HEK293T (cell line): ENCODE measurements at regions of chr4 and their contacts with region 1.

Region 1: GRCh38 chr4:121370729-121371325 is 10.0 kb downstream of the QRFPR start:
- DNase-seq: peak; percentile 19

Region 2: GRCh38 chr4:120304801-120305200 is 1066.0 kb before region 1 on chr4:
- CTCF ChIA-PET with region 1: no interaction called
- POLR2A ChIA-PET with region 1: no interaction called
- DNase-seq: no peak

Region 3: GRCh38 chr4:121199742-121200561 is 170.9 kb before region 1 on chr4:
- CTCF ChIA-PET with region 1: no interaction called
- POLR2A ChIA-PET with region 1: no interaction called
- DNase-seq: no peak

Region 4: DNA sequence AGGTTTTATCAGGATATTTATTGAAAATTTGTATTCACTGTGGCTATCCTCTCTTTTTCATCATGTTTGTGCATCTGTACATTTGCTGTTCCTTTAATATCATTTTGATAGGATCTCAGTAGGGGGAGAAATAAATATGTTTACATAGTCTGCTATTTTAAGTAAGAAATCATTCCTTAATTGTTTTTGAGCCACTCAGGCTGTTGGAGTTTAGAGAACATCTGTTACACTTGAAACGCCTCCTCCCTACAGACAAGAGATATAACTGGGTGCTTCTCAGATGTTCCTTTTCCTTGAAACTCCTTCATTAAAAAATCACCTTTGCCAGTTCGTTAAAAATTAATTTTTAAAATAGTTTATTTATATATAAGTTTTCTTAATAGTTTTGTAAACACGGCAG is 49.4 kb before region 1 on chr4:
- CTCF ChIA-PET with region 1: no interaction called
- POLR2A ChIA-PET with region 1: no interaction called
- DNase-seq: no peak

Region 5: DNA sequence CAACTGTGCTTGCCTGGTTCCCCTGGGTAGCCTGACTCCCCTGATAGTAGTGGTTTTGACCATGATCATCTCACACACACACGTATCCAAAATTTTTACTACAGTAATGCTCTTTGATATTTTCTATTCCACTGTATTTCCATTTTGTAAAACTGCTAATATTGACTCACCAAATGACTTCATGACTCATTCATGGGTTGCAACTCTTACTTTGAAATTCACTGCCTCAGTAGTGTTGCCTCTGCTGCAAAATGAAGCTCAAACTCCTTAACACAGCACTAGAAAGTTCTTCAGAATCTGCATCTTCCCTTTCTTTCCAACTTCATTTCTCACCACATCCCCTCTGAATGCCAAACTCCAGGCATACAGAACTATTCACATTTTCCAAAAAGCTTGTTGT is 10.3 kb before region 1 on chr4:
- CTCF ChIA-PET with region 1: interaction called, 10 read pairs
- POLR2A ChIA-PET with region 1: no interaction called
- DNase-seq: no peak

Region 6: GRCh38 chr4:121390335-121390734 is 19.5 kb after region 1 on chr4:
- CTCF ChIA-PET with region 1: no interaction called
- POLR2A ChIA-PET with region 1: no interaction called
- DNase-seq: no peak

Region 7: GRCh38 chr4:121421594-121421993 is 50.8 kb after region 1 on chr4:
- CTCF ChIA-PET with region 1: interaction called, 11 read pairs
- POLR2A ChIA-PET with region 1: no interaction called
- DNase-seq: peak; percentile 14